PC-3 (cell line): ENCODE measurements at regions of chr5 and their contacts with region 1.

Region 1: DNA sequence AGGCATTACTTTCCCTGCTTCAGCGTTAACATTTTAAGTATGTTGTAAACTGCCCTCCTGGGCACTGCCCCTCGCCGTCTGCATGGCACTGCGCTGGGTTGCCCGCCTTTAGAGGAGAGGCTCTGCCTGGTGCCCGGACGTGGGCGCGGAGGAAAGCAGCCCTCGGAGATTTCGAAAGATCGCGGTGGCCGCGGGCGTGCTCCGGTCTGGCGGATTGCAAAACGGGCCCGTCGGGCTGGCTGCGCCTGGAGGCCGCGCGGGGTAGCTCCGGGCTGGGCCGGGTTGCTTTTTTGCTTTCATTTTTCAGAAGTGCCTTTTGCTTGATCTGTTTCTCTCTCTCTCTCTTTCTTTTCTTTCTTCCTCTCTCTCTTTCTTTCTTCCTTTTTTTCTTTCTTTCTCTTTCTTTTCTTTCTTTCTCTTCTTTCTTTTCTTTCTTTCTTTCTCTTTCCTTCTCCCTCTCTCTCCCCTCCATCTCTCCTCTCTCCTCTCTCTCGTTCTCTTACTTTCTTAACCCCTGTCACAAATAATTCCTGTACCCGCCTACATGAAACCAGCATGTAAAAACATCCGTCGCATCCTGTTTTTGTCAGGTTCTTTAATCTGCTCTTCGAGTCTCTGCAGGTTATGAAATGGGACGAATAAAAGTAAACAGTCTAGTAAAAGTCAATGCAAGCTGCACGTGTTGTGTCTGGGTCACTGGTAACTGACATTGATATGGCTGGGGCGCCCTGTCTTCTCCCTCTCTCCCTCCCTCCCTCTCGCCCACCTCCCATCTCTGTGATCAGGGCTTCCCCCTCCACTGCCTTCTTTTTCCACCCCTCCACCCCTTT is 1.7 kb downstream of the FST start:
- DNase-seq: no peak
- ATAC-seq: no peak
- H3K4me3 ChIP-seq: peak overlapping the region; percentile 97
- H3K27ac ChIP-seq: peak overlapping the region; percentile 96
- H3K4me1 ChIP-seq: peaks cover 29% of the 10 kb centered on the region
- H3K27me3 ChIP-seq: no peaks in the 10 kb centered on the region
- CTCF ChIP-seq: no peak

Region 2: DNA sequence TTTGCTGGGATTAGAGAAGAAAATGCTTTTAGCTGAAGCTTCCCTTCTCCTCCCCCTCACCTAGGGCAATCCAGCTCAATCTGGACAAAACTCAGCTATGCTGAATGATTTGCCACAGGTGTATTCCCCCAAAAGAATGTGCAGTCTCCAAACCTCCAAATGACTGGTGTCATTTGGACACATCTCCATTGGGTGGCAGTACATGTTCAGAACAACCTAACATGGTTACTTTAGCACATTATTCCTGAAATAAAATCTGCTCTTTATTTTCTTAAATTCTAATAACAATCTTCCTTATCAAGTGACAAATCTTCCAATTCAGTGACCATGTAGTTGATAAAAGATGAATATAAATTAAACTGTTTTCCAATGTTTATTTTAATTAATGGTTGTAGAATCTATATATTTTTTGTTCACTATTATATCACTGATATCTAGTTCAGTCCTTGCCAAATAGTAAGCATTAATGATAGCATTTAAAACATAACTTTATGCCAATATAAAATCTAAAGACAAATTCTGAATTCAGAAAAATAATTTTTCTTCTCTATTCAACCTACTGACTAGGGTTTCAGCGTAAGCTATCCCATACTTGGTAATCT is 311.3 kb before region 1 on chr5:
- CTCF ChIA-PET with region 1: no interaction called
- POLR2A ChIA-PET with region 1: no interaction called
- intact Hi-C with region 1: loop called (anchors 2 kb)
- DNase-seq: peak; percentile 69
- ATAC-seq: peak; percentile 92
- H3K4me3 ChIP-seq: no peak overlapping the region
- H3K27ac ChIP-seq: 0 out of 2 replicates have a peak overlapping the region, but pooled peaks have one; percentile 9
- H3K4me1 ChIP-seq: peaks cover 9% of the 10 kb centered on the region
- H3K27me3 ChIP-seq: no peaks in the 10 kb centered on the region
- CTCF ChIP-seq: peak; percentile 83

Region 3: DNA sequence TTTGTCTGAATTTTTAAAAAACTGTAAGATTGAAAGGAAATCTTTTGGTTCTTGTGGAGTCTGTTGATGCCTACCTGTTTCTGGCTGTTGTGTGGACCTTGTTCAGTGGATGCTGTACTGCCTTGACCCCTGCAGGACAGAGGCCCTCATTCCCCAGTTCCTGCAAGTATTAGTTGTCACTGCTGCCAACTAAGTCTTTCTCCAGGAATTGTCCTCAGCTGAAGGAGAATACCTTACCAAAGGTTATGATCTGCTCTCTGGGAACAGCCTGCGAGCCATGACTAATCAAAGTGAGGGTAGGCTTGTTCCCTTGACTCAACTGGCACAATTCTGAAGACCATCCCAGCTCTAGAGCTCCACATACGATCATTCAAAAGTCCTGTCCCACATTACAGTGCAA is 147.0 kb before region 1 on chr5:
- CTCF ChIA-PET with region 1: no interaction called
- POLR2A ChIA-PET with region 1: interaction called, 9 read pairs
- intact Hi-C with region 1: loop called (anchors 1 kb)
- DNase-seq: peak; percentile 48
- ATAC-seq: peak; percentile 7; the same call in 1 of the 2 replicates
- H3K4me3 ChIP-seq: no peak overlapping the region
- H3K27ac ChIP-seq: peak overlapping the region; percentile 100
- H3K4me1 ChIP-seq: peaks cover 63% of the 10 kb centered on the region
- H3K27me3 ChIP-seq: no peaks in the 10 kb centered on the region
- CTCF ChIP-seq: peak; percentile 47; the same call in 1 of the 2 replicates

Region 4: DNA sequence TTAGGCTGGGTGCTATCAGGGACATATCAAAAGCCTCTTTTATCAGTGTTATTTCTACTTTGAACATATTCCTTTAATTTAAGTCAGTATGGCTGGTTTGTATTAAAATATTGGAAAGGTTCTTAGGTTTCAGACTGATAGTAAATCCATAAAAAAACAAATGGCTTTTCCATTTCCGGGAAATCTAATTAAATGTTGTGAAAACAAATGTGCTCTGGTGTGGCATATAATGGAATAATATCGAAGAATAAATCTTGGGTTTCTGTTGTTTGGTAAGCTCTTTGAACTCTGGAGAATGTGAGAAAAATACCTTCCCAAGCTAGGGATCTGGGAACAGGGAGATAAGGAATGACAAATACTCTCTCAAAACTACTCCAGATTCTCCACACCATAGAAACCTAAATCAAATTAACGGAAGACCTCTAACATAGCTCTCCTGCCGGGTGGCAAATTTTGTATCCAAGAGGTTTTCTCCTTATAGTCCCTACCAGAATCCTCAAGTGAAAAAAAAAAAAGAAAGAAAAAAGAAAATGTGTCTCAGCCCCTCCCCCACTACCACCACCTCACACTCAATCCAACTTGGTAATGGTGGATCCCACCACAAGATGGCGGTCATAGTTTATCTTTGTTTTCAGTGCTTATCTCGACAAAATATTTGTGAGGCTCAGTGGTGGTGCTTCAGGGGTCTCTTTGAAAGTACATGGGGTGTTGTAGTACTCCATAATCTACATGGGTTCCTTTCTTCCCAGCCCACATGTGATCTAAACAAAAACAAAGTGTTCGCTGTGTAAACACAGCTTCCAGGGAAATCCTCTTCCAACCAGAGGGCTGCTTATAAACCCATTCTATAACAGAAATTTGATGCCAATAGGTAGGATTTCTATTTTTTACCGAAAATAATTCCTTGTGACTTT is 56.2 kb before region 1 on chr5:
- CTCF ChIA-PET with region 1: no interaction called
- POLR2A ChIA-PET with region 1: no interaction called
- intact Hi-C with region 1: loop called (anchors 2 kb)
- DNase-seq: peak; percentile 46
- ATAC-seq: no peak
- H3K4me3 ChIP-seq: no peak overlapping the region
- H3K27ac ChIP-seq: peak overlapping the region; percentile 100
- H3K4me1 ChIP-seq: peaks cover 73% of the 10 kb centered on the region
- H3K27me3 ChIP-seq: no peaks in the 10 kb centered on the region
- CTCF ChIP-seq: peak; percentile 53

Region 5: DNA sequence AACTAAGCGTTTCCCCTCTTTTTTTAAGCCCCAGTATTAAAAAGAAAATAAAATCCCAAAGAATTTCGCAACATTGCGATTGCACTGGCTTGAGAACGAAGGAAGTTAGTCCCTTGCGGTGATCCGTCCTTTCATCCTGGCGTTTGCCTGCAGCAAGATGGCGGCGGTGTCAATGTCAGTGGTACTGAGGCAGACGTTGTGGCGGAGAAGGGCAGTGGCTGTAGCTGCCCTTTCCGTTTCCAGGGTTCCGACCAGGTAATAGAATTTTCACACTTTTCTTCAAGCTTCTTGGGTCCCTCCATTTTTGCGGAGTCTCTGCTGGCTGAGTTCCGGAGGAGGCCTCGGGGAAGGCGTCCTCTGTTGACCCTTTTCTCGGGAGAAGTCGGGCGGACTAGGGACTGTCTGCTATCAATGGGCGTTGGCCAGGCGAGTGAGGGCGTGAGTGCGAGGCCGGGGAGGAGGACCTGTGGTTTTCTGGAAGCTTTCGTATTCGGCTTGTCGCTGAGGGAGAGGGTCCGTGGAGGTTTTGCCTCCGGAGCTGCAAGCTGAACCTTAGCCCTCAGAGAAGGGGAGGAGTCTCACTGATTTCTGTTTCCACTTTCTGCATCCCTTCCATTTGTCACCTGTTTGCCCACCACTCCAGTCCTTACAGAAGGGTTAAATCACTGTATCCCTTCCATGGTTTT is 78.5 kb after region 1 on chr5 and contains the start of gene NDUFS4:
- CTCF ChIA-PET with region 1: no interaction called
- POLR2A ChIA-PET with region 1: no interaction called
- intact Hi-C with region 1: loop called (anchors 10 kb)
- DNase-seq: peak; percentile 70
- ATAC-seq: peak; percentile 82
- H3K4me3 ChIP-seq: peak within 1 kb of the TSS; percentile 85
- H3K27ac ChIP-seq: peak within 1 kb of the TSS; percentile 67
- H3K4me1 ChIP-seq: 0 out of 2 replicates have a peak, but pooled peaks cover 10% of the 10 kb centered on the region
- H3K27me3 ChIP-seq: no peaks in the 10 kb centered on the region
- CTCF ChIP-seq: no peak
- total RNA-seq, gene NDUFS4: 59.8 and 72.6 TPM in 2 replicates

Region 6: GRCh38 chr5:53817183-53817582 is 335.1 kb after region 1 on chr5:
- CTCF ChIA-PET with region 1: no interaction called
- POLR2A ChIA-PET with region 1: interaction called, 15 read pairs
- intact Hi-C with region 1: no loop called
- DNase-seq: peak; percentile 4
- ATAC-seq: no peak
- H3K4me3 ChIP-seq: no peak overlapping the region
- H3K27ac ChIP-seq: no peak overlapping the region
- H3K4me1 ChIP-seq: no peaks in the 10 kb centered on the region
- H3K27me3 ChIP-seq: no peaks in the 10 kb centered on the region
- CTCF ChIP-seq: no peak

Region 7: GRCh38 chr5:54217826-54218503 is 735.9 kb after region 1 on chr5:
- CTCF ChIA-PET with region 1: no interaction called
- POLR2A ChIA-PET with region 1: no interaction called
- intact Hi-C with region 1: loop called (anchors 5 kb)
- DNase-seq: peak; percentile 70
- ATAC-seq: peak; percentile 74
- H3K4me3 ChIP-seq: no peak overlapping the region
- H3K27ac ChIP-seq: no peak overlapping the region
- H3K4me1 ChIP-seq: no peaks in the 10 kb centered on the region
- H3K27me3 ChIP-seq: no peaks in the 10 kb centered on the region
- CTCF ChIP-seq: peak; percentile 68